Caco-2 (cell line): ENCODE measurements at regions of chr2 and their contacts with region 1.

Region 1: DNA sequence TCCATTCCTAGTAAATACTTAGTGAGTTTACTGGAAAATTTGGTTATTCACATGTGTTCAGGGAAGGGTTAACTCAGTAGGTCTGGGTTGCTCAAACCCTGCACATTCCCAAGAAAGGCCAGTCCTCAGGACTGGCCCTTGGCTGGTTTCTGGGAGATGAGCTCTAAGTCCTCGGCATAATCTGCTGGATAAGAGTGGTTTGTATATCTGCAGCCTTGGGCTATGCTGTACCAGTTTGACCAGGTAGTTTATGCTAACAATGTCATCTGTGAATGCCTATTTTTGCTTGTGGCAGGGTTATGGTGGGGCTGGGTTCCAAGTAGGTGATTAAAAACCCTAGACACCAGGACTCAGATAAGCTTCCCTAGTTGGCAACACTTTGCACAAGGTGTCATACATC is 7.4 kb upstream of the PTH2R start:
- DNase-seq: no peak
- H3K4me3 ChIP-seq: no peak overlapping the region
- H3K4me3 Mint-ChIP-seq: no peak overlapping the region
- H3K27ac Mint-ChIP-seq: no peak overlapping the region
- H3K4me1 ChIP-seq: no peaks in the 10 kb centered on the region; the same call in 1 of the 2 replicates
- H3K4me1 Mint-ChIP-seq: peaks cover 8% of the 10 kb centered on the region
- H3K27me3 ChIP-seq: no peaks in the 10 kb centered on the region; the same call in 1 of the 2 replicates
- H3K27me3 Mint-ChIP-seq: peaks cover 7% of the 10 kb centered on the region
- CTCF ChIP-seq: no peak

Region 2: GRCh38 chr2:208783187-208783586 is 384.0 kb after region 1 on chr2:
- CTCF ChIA-PET with region 1: no interaction called
- POLR2A ChIA-PET with region 1: no interaction called
- intact Hi-C with region 1: loop called (anchors 5 kb)
- DNase-seq: peak in 1 of 2 experiments; percentile 6
- H3K4me3 ChIP-seq: no peak overlapping the region
- H3K4me3 Mint-ChIP-seq: no peak overlapping the region
- H3K27ac Mint-ChIP-seq: no peak overlapping the region
- H3K4me1 ChIP-seq: no peaks in the 10 kb centered on the region
- H3K4me1 Mint-ChIP-seq: no peaks in the 10 kb centered on the region
- H3K27me3 ChIP-seq: no peaks in the 10 kb centered on the region
- H3K27me3 Mint-ChIP-seq: no peaks in the 10 kb centered on the region
- CTCF ChIP-seq: peak; percentile 35 to 41

Region 3: GRCh38 chr2:209577376-209578357 is 1178.5 kb after region 1 on chr2:
- CTCF ChIA-PET with region 1: no interaction called
- POLR2A ChIA-PET with region 1: no interaction called
- intact Hi-C with region 1: loop called (anchors 5 kb)
- DNase-seq: no peak
- H3K4me3 ChIP-seq: no peak overlapping the region
- H3K4me3 Mint-ChIP-seq: no peak overlapping the region
- H3K27ac Mint-ChIP-seq: no peak overlapping the region
- H3K4me1 ChIP-seq: no peaks in the 10 kb centered on the region
- H3K4me1 Mint-ChIP-seq: no peaks in the 10 kb centered on the region
- H3K27me3 ChIP-seq: no peaks in the 10 kb centered on the region
- H3K27me3 Mint-ChIP-seq: peaks cover 4% of the 10 kb centered on the region
- CTCF ChIP-seq: peak in 1 of 2 experiments; percentile 2